HEK293 (cell line): ENCODE measurements at regions of chr13 and their contacts with region 1.

Region 1: DNA sequence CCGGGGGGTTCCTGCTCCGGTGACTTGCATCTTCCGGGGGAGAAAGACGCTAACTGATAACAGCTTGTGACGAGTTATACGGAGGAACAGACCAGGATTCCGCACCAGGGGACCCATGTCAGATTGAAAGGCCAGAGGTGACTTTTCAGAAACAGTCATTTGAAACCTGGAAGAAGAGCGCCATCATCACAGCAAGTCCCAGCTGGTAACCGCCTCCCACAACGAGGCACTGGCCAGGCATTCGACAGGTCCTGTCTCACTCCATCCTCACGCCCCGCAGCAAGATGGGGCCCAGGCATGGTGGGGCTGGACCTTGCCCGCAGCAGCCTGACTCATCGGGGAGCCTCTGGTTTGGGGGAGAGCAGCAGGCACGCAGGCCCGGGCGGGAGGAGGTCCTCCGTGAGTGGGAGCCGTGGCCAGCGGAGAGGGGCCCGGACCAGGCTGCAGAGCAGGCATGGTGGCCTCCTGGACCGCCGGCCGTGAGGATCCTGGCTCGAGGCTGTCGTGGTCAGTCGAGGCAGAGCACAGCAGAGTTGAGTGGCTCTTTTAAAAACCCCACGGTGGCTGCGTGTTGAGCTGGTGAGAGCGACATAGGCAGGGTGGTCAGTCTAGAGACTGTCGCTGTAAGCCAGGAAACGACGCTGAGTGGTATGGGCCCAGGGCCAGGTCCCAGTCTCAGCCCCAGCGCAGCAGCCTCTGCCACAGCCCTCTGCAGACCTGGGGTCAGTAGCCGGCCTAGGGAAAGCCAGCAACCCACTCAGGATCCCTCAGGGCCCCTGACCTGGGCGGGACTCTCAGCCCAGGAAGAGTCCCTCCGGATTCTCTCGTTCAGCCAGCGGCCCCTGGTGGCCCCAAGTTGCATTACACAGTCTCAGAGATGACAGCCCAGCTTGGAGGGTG is 94.9 kb upstream of the MCF2L start:
- H3K4me3 ChIP-seq: no peak overlapping the region
- H3K27ac ChIP-seq: no peak overlapping the region
- H3K4me1 ChIP-seq: no peaks in the 10 kb centered on the region
- CTCF ChIP-seq: no peak

Region 2: GRCh38 chr13:112641456-112642089 is 232.5 kb before region 1 on chr13:
- CTCF ChIA-PET with region 1: interaction called, 11 read pairs
- POLR2A ChIA-PET with region 1: no interaction called
- H3K4me3 ChIP-seq: no peak overlapping the region
- H3K27ac ChIP-seq: no peak overlapping the region
- H3K4me1 ChIP-seq: no peaks in the 10 kb centered on the region
- CTCF ChIP-seq: no peak